ENCODE measurements at regions of chr14 and their contacts with region 1.

Region 1: GRCh38 chr14:65287264-65288131 is 125.0 kb upstream of the FUT8 start:
- DNase-seq: peak in 8 of 9 donors; percentile 51 to 80 (median 75)
- ATAC-seq: peak; percentile 84
- H3K4me3 ChIP-seq: peak overlapping the region; percentile 27
- H3K4me3 Mint-ChIP-seq: peak overlapping the region; percentile 75 to 91 (median 85)
- H3K27ac ChIP-seq: peak overlapping the region; percentile 69
- H3K27ac Mint-ChIP-seq: peak overlapping the region; percentile 90 to 100 (median 98)
- H3K4me1 ChIP-seq: peaks cover 49 to 59% of the 10 kb centered on the region in 2 donors
- H3K4me1 Mint-ChIP-seq: peaks cover 51 to 90% (median 77%) of the 10 kb centered on the region in 7 donors
- H3K27me3 ChIP-seq: no peaks in the 10 kb centered on the region
- H3K27me3 Mint-ChIP-seq: no peaks in the 10 kb centered on the region

Region 2: DNA sequence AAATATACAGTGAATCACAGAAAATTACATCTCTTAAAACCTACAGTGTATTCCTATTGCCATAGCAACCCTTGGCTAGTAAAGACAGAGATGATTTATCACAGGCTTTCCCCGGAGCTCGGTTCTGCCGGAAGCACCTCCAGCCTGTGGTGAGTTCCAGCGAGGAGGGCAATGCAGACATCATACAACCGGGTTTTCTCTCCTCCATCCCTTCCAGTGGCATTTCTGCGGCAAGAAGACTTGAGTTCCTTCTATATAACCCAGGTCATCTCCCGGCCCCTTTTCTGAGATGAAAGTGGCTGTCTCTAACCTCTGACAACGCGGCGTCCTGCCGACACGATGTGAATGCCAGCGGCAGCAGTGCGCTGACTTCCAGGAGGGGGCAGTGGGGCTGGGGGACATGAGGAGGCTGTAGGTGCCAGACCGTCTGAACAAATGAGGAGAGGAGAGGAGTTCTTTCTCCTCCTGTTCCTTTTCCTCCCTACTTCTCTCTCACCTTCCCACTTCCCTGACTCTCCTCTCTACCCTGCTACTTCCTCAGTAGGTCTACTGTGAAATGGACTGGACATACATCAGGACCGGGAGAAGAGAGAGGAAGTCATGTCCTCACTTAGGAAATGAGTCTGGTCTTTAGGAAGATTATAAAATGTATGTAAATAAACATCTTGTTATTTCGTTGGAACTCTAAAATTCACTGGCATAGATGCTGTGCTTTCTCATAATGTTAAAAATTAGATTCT is 116.6 kb before region 1 on chr14:
- CTCF ChIA-PET with region 1: no interaction called
- POLR2A ChIA-PET with region 1: no interaction called
- intact Hi-C with region 1: loop called (anchors 2 to 10 kb)
- DNase-seq: peak in 8 of 9 donors; percentile 17 to 58 (median 31)
- ATAC-seq: peak; percentile 80
- H3K4me3 ChIP-seq: peak overlapping the region; percentile 47
- H3K4me3 Mint-ChIP-seq: peak overlapping the region; percentile 57 to 82 (median 79)
- H3K27ac ChIP-seq: no peak overlapping the region
- H3K27ac Mint-ChIP-seq: peak overlapping the region in 1 of 9 donors; percentile 85
- H3K4me1 ChIP-seq: peaks cover 0 to 4% of the 10 kb centered on the region in 2 donors
- H3K4me1 Mint-ChIP-seq: peaks cover 4 to 41% (median 10%) of the 10 kb centered on the region in 7 donors
- H3K27me3 ChIP-seq: peaks cover 0 to 5% of the 10 kb centered on the region in 2 donors
- H3K27me3 Mint-ChIP-seq: peaks cover 3 to 18% (median 12%) of the 10 kb centered on the region in 5 donors

Region 3: GRCh38 chr14:65229751-65230749 is 57.4 kb before region 1 on chr14:
- CTCF ChIA-PET with region 1: no interaction called
- POLR2A ChIA-PET with region 1: interaction called, 7 read pairs
- intact Hi-C with region 1: loop called in 1 of 2 experiments (anchors 2 kb)
- DNase-seq: peak in 6 of 9 donors; percentile 27 to 49 (median 35)
- ATAC-seq: peak; percentile 80
- H3K4me3 ChIP-seq: peak overlapping the region; percentile 56
- H3K4me3 Mint-ChIP-seq: peak overlapping the region; percentile 83 to 93 (median 90)
- H3K27ac ChIP-seq: peak overlapping the region; percentile 64
- H3K27ac Mint-ChIP-seq: peak overlapping the region; percentile 92 to 99 (median 96)
- H3K4me1 ChIP-seq: peaks cover 0 to 14% of the 10 kb centered on the region in 2 donors
- H3K4me1 Mint-ChIP-seq: peaks cover 28 to 63% (median 52%) of the 10 kb centered on the region in 7 donors
- H3K27me3 ChIP-seq: no peaks in the 10 kb centered on the region
- H3K27me3 Mint-ChIP-seq: no peaks in the 10 kb centered on the region

Region 4: DNA sequence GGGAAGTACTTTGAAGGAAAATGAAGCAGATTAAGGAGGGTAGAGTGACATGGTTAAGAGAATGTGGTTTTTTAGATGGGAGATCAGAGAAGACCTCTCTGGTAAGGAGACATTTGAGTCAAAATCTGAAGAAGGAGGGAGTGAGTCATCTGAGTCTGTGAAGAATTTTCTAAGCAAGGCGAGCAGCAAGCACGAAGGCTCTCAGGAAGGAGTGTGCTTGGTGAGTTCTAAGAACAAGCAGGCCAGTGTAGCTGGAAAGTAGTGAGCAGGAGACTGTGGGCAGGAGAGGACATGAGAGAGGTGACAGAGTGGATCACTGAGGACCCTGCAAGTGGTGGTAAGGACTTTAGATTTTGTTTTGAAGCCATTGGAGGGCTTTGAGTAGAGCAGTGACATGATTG is 48.7 kb after region 1 on chr14:
- CTCF ChIA-PET with region 1: no interaction called
- POLR2A ChIA-PET with region 1: no interaction called
- intact Hi-C with region 1: loop called (anchors 1 to 5 kb)
- DNase-seq: peak in 2 of 9 donors; percentile 10 to 60
- ATAC-seq: peak; percentile 37
- H3K4me3 ChIP-seq: no peak overlapping the region
- H3K4me3 Mint-ChIP-seq: peak overlapping the region in 6 of 10 donors; percentile 2 to 83 (median 4)
- H3K27ac ChIP-seq: no peak overlapping the region
- H3K27ac Mint-ChIP-seq: peak overlapping the region; percentile 16 to 91 (median 64)
- H3K4me1 ChIP-seq: peaks cover 0 to 16% of the 10 kb centered on the region in 2 donors
- H3K4me1 Mint-ChIP-seq: peaks cover 21 to 60% (median 42%) of the 10 kb centered on the region in 7 donors
- H3K27me3 ChIP-seq: no peaks in the 10 kb centered on the region
- H3K27me3 Mint-ChIP-seq: no peaks in the 10 kb centered on the region

Region 5: DNA sequence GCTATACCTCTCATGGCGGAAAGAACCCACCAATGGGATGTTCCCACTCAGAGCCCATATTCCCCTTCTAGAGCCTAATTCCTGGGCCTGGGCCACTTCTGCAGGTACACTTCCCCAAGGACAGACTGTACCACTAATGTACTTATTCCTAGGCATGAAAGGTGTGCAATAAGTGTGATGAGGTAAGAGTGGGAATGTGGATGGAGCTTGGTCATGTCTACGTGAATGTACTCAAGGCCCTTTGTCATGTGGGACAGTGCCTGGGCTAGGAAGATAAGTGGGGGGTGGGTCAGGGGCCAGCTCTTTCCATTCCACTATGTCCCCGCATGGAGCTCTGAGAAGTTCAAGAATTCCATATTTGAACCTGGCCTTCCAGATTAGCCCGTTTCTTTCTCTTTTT is 61.6 kb after region 1 on chr14:
- CTCF ChIA-PET with region 1: no interaction called
- POLR2A ChIA-PET with region 1: no interaction called
- intact Hi-C with region 1: no loop called
- DNase-seq: no peak
- ATAC-seq: no peak
- H3K4me3 ChIP-seq: no peak overlapping the region
- H3K4me3 Mint-ChIP-seq: no peak overlapping the region
- H3K27ac ChIP-seq: no peak overlapping the region
- H3K27ac Mint-ChIP-seq: peak overlapping the region in 1 of 9 donors; percentile 19
- H3K4me1 ChIP-seq: no peaks in the 10 kb centered on the region
- H3K4me1 Mint-ChIP-seq: peaks cover 4 to 53% (median 15%) of the 10 kb centered on the region in 7 donors
- H3K27me3 ChIP-seq: no peaks in the 10 kb centered on the region
- H3K27me3 Mint-ChIP-seq: no peaks in the 10 kb centered on the region

Region 6: DNA sequence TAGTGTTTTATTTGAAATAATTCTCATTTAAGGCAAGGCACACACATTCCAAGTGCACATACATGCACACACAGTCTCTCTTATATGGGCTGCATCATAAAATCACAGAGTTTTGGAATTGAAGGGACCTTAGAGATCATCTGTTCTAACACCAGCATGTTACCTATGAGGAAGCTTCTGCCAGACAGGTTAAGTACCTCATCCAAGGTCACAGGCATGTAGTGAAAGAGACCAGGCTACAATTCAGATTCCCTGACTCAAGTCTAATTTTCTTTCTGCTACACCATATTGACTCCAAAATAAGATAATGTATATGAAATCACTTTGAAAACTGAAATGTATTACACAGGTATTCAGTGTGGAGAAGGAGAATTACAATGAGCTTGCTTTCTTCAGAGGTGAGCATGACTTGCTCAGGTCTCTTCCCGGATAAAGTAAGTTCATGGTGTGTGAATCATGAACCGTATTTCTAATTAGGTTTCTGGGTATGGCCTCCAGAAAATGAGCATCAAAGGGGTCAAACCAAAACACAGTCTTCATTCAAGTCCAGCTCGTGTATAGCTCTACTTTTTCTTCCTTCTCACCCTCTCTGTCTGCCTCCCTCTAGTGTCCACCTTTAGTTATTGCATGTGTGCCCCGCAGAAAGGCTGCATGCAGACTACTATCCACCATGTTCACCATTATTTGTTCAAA is 536.9 kb after region 1 on chr14:
- CTCF ChIA-PET with region 1: interaction called, 3 read pairs
- POLR2A ChIA-PET with region 1: no interaction called
- intact Hi-C with region 1: loop called in 1 of 2 experiments (anchors 2 kb)
- DNase-seq: peak in 8 of 9 donors; percentile 38 to 71 (median 60)
- ATAC-seq: peak; percentile 93
- H3K4me3 ChIP-seq: no peak overlapping the region
- H3K4me3 Mint-ChIP-seq: peak overlapping the region in 1 of 10 donors; percentile 39
- H3K27ac ChIP-seq: no peak overlapping the region
- H3K27ac Mint-ChIP-seq: peak overlapping the region in 3 of 9 donors; percentile 0 to 66 (median 66)
- H3K4me1 ChIP-seq: peaks cover 6 to 8% of the 10 kb centered on the region in 2 donors
- H3K4me1 Mint-ChIP-seq: peaks cover 3 to 33% (median 14%) of the 10 kb centered on the region in 7 donors
- H3K27me3 ChIP-seq: no peaks in the 10 kb centered on the region
- H3K27me3 Mint-ChIP-seq: peaks cover 0 to 7% (median 0%) of the 10 kb centered on the region in 5 donors

Measured in naive thymus-derived CD4-positive, alpha-beta T cell (primary cell).